MCF 10A (cell line): ENCODE measurements at regions of chr22 and their contacts with region 1.

Region 1: GRCh38 chr22:36977947-36978660 is 41.1 kb downstream of the TST start:
- DNase-seq: peak; percentile 87
- H3K4me3 Mint-ChIP-seq: peak overlapping the region; percentile 67
- H3K27ac Mint-ChIP-seq: peak overlapping the region; percentile 73
- H3K4me1 Mint-ChIP-seq: peaks cover 10% of the 10 kb centered on the region
- H3K27me3 Mint-ChIP-seq: no peaks in the 10 kb centered on the region
- CTCF ChIP-seq: peak; percentile 84

Region 2: GRCh38 chr22:36684841-36685240 is 293.3 kb before region 1 on chr22:
- CTCF ChIA-PET with region 1: no interaction called
- POLR2A ChIA-PET with region 1: no interaction called
- intact Hi-C with region 1: no loop called
- DNase-seq: no peak
- H3K4me3 Mint-ChIP-seq: no peak overlapping the region
- H3K27ac Mint-ChIP-seq: no peak overlapping the region
- H3K4me1 Mint-ChIP-seq: no peaks in the 10 kb centered on the region
- H3K27me3 Mint-ChIP-seq: peaks cover 41% of the 10 kb centered on the region
- CTCF ChIP-seq: no peak

Region 3: GRCh38 chr22:36781656-36782627 is 196.2 kb before region 1 on chr22:
- CTCF ChIA-PET with region 1: interaction called, 25 read pairs
- POLR2A ChIA-PET with region 1: no interaction called
- intact Hi-C with region 1: loop called (anchors 1 kb)
- DNase-seq: peak; percentile 86
- H3K4me3 Mint-ChIP-seq: no peak overlapping the region
- H3K27ac Mint-ChIP-seq: no peak overlapping the region
- H3K4me1 Mint-ChIP-seq: peaks cover 8% of the 10 kb centered on the region
- H3K27me3 Mint-ChIP-seq: peaks cover 32% of the 10 kb centered on the region
- CTCF ChIP-seq: peak; percentile 84

Region 4: DNA sequence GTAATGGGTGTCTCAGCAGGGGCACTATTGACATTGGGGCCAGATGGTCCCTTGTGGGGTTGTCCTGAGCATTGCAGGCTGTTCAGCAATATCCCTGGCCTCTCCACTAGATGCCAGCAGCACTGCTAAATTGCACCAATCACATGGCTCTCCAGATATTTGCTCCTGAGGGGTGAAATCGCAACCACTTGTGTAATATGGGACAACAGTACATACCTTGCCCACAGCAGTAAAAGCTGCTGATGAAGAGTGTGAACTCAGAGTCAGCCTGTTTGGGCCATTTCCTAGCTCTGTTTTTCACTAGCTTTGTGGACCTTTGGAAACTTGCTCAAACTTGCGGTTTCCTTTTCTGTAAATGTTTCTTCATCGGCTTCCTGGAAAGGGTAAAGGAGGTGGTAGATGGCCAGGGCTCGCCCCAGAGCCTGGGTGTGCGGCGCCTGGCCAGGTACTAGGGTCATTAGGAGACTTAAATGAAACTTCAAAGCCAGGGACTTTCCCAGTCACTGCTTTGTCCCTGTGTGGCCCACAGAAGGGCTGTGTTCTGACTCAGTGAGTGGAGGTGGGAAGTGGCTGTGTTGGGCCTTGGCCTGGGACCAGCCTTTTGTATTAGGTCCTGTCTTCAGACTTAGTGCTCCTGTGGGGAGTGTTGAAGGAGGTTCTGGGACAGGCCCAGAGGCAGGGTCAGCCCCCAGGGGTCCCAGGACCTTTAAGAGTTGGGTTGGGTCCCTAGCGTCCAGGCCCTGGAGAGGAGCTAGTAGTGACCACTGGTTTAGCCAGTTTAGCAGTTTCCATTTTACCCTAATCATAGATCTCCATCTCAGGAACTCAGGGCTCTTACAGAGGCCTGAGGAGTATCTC is 104.2 kb before region 1 on chr22:
- CTCF ChIA-PET with region 1: interaction called, 15 read pairs
- POLR2A ChIA-PET with region 1: interaction called, 4 read pairs
- intact Hi-C with region 1: loop called (anchors 1 kb)
- DNase-seq: peak; percentile 97
- H3K4me3 Mint-ChIP-seq: peak overlapping the region; percentile 29
- H3K27ac Mint-ChIP-seq: peak overlapping the region; percentile 90
- H3K4me1 Mint-ChIP-seq: peaks cover 29% of the 10 kb centered on the region
- H3K27me3 Mint-ChIP-seq: peaks cover 31% of the 10 kb centered on the region
- CTCF ChIP-seq: peak; percentile 51

Region 5: GRCh38 chr22:37012262-37012904 is 34.3 kb after region 1 on chr22:
- CTCF ChIA-PET with region 1: no interaction called
- POLR2A ChIA-PET with region 1: no interaction called
- intact Hi-C with region 1: no loop called
- DNase-seq: peak; percentile 26
- H3K4me3 Mint-ChIP-seq: no peak overlapping the region
- H3K27ac Mint-ChIP-seq: no peak overlapping the region
- H3K4me1 Mint-ChIP-seq: peaks cover 7% of the 10 kb centered on the region
- H3K27me3 Mint-ChIP-seq: peaks cover 12% of the 10 kb centered on the region
- CTCF ChIP-seq: no peak

Region 6: GRCh38 chr22:37121887-37122591 is 143.9 kb after region 1 on chr22:
- CTCF ChIA-PET with region 1: no interaction called
- POLR2A ChIA-PET with region 1: no interaction called
- intact Hi-C with region 1: no loop called
- DNase-seq: peak; percentile 68
- H3K4me3 Mint-ChIP-seq: no peak overlapping the region
- H3K27ac Mint-ChIP-seq: peak overlapping the region; percentile 68
- H3K4me1 Mint-ChIP-seq: peaks cover 16% of the 10 kb centered on the region
- H3K27me3 Mint-ChIP-seq: peaks cover 3% of the 10 kb centered on the region
- CTCF ChIP-seq: no peak

Region 7: GRCh38 chr22:37498289-37498909 is 520.3 kb after region 1 on chr22:
- CTCF ChIA-PET with region 1: no interaction called
- POLR2A ChIA-PET with region 1: no interaction called
- intact Hi-C with region 1: no loop called
- DNase-seq: peak; percentile 21
- H3K4me3 Mint-ChIP-seq: no peak overlapping the region
- H3K27ac Mint-ChIP-seq: no peak overlapping the region
- H3K4me1 Mint-ChIP-seq: peaks cover 32% of the 10 kb centered on the region
- H3K27me3 Mint-ChIP-seq: no peaks in the 10 kb centered on the region
- CTCF ChIP-seq: peak; percentile 23